ENCODE measurements at regions of chr16 and their contacts with region 1.

Region 1: GRCh38 chr16:31754998-31755615 is 118.5 kb upstream of the ZNF267 start:
- DNase-seq: no peak
- ATAC-seq: no peak
- H3K4me3 ChIP-seq: no peak overlapping the region
- H3K4me3 Mint-ChIP-seq: no peak overlapping the region
- H3K27ac ChIP-seq: no peak overlapping the region
- H3K27ac Mint-ChIP-seq: no peak overlapping the region
- H3K4me1 ChIP-seq: no peaks in the 10 kb centered on the region
- H3K4me1 Mint-ChIP-seq: no peaks in the 10 kb centered on the region
- H3K27me3 ChIP-seq: no peaks in the 10 kb centered on the region
- H3K27me3 Mint-ChIP-seq: no peaks in the 10 kb centered on the region
- CTCF ChIP-seq: no peak

Region 2: DNA sequence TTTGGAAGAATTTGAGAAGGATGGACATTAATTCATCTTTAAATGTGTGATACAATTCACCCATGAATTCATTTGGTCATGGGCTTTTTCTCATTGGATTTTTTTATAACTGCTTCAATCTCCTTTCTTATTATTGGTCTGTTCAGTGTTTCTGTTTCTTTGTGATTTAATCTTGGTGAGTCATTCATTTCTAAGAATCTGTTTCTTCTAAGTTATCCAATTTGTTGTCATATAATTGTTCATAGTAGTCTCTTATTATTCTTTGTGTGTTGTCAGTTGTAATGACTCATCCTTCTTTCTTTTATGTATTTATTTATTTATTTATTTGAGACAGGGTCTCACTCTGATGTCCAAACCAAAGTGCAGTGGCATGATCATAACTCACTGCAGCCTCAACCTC is 27.6 kb before region 1 on chr16:
- CTCF ChIA-PET with region 1: no interaction called
- POLR2A ChIA-PET with region 1: no interaction called
- intact Hi-C with region 1: no loop called
- DNase-seq: no peak
- ATAC-seq: no peak
- H3K4me3 ChIP-seq: no peak overlapping the region
- H3K4me3 Mint-ChIP-seq: no peak overlapping the region
- H3K27ac ChIP-seq: no peak overlapping the region
- H3K27ac Mint-ChIP-seq: no peak overlapping the region
- H3K4me1 ChIP-seq: no peaks in the 10 kb centered on the region
- H3K4me1 Mint-ChIP-seq: peaks cover 18% of the 10 kb centered on the region
- H3K27me3 ChIP-seq: no peaks in the 10 kb centered on the region
- H3K27me3 Mint-ChIP-seq: no peaks in the 10 kb centered on the region
- CTCF ChIP-seq: no peak

Region 3: DNA sequence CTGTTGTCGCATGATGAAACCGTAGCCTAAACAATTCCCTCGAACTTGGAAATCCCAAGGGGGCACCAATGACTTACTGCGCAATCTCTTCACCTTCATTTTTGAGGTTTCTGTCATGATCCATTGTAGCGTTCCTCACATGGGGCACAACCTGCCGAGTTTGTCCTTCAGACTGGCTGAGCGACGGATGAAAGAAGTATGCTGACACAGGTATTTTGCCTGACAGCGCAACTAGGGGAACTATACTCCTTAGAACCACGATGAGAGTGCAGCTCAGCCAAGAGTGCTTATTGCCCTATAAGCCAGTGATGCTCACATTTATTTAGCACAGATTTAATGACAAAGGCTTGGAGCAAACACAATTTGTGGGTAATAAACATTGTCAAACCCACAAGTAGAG is 12.2 kb after region 1 on chr16:
- CTCF ChIA-PET with region 1: no interaction called
- POLR2A ChIA-PET with region 1: no interaction called
- intact Hi-C with region 1: no loop called
- DNase-seq: no peak
- ATAC-seq: no peak
- H3K4me3 ChIP-seq: no peak overlapping the region
- H3K4me3 Mint-ChIP-seq: no peak overlapping the region
- H3K27ac ChIP-seq: no peak overlapping the region
- H3K27ac Mint-ChIP-seq: no peak overlapping the region
- H3K4me1 ChIP-seq: no peaks in the 10 kb centered on the region
- H3K4me1 Mint-ChIP-seq: no peaks in the 10 kb centered on the region
- H3K27me3 ChIP-seq: no peaks in the 10 kb centered on the region
- H3K27me3 Mint-ChIP-seq: no peaks in the 10 kb centered on the region
- CTCF ChIP-seq: no peak

Region 4: GRCh38 chr16:31913668-31914067 is 158.6 kb after region 1 on chr16:
- CTCF ChIA-PET with region 1: no interaction called
- POLR2A ChIA-PET with region 1: no interaction called
- intact Hi-C with region 1: loop called in 1 of 2 experiments (anchors 5 kb)
- DNase-seq: no peak
- ATAC-seq: no peak
- H3K4me3 ChIP-seq: no peak overlapping the region
- H3K4me3 Mint-ChIP-seq: no peak overlapping the region
- H3K27ac ChIP-seq: no peak overlapping the region
- H3K27ac Mint-ChIP-seq: no peak overlapping the region
- H3K4me1 ChIP-seq: no peaks in the 10 kb centered on the region
- H3K4me1 Mint-ChIP-seq: peaks cover 18% of the 10 kb centered on the region
- H3K27me3 ChIP-seq: no peaks in the 10 kb centered on the region
- H3K27me3 Mint-ChIP-seq: no peaks in the 10 kb centered on the region
- CTCF ChIP-seq: no peak